Motor neuron (in vitro differentiated cells): ENCODE measurements at regions of chr7 and their contacts with region 1.

Region 1: DNA sequence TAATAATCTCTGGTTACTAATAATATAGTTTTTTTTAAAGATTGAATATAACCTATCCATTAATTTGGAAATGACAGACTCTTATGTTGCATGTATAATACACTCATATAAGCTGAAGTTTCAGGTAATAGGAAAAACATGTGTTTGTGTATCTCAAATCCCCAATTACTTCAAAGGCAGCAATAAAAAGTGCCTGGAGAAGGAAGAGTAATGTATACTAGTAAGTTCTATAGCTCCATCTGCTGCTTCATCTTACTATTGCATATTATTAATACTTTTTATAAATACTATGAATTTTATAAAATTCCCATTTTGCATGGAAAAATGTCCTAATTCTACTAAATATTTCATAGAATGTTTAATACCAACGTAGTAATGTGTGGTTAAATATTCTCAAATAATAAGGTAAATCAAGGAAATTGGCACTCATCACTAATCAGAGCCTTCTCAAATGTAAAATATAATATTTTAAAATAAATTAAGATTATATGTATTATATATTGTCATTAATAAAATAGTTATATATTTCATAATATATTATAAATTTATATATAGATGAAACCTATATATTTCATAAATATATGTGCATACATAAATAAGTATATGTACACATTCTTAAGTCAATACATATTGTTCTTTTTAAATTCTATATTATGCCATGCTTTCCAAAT is 311.9 kb downstream of the HGF start:
- ATAC-seq: no peak
- H3K4me3 ChIP-seq: no peak overlapping the region
- H3K27ac ChIP-seq: no peak overlapping the region
- H3K4me1 ChIP-seq: no peaks in the 10 kb centered on the region

Region 2: DNA sequence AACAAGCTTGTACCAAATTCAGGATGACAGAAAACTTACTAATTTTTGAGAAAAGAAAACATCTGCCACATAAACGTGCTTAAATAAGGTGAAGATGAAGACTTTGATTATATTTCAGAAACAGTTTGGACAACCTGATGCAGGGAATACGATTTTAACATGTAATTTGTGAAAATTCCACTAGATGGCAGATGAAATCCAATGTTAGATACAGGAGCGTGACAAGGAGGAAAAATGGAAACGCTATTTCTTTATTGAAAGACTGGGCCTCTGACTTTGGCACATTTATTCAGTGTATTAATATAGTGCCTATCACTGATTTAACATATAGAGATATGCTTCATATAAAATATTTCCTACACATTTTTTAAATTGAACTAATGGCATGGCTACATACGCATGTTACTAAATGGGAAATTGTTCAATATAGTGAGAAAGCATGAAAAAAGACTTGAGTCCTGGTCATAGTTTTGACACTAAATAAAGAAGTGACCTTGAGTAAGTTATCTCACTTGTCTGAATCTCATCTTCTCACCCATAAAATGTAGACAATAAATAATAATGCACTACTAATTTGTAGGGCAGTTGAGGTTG is 758.8 kb before region 1 on chr7:
- in situ Hi-C with region 1: loop called in 8 of 9 experiments (anchors 10 to 25 kb)
- ATAC-seq: peak in 7 of 8 experiments; percentile 42 to 68 (median 53)
- H3K4me3 ChIP-seq: no peak overlapping the region
- H3K27ac ChIP-seq: no peak overlapping the region
- H3K4me1 ChIP-seq: peaks cover 4 to 7% of the 10 kb centered on the region in 2 donors

Region 3: GRCh38 chr7:81627536-81628287 is 169.7 kb after region 1 on chr7:
- in situ Hi-C with region 1: no loop called
- ATAC-seq: peak in 3 of 8 experiments; percentile 18 to 64 (median 63)
- H3K4me3 ChIP-seq: no peak overlapping the region
- H3K27ac ChIP-seq: no peak overlapping the region
- H3K4me1 ChIP-seq: no peaks in the 10 kb centered on the region